Right ventricle myocardium inferior (tissue), 1 donor: ENCODE measurements at regions of chr1 and their contacts with region 1.

Region 1: GRCh38 chr1:91161749-91162148 is 139.9 kb upstream of the ZNF644 start:
- DNase-seq: no peak
- ATAC-seq: no peak

Region 2: GRCh38 chr1:90579212-90579802 is 582.4 kb before region 1 on chr1:
- intact Hi-C with region 1: loop called (anchors 5 kb)
- DNase-seq: no peak
- ATAC-seq: no peak

Region 3: DNA sequence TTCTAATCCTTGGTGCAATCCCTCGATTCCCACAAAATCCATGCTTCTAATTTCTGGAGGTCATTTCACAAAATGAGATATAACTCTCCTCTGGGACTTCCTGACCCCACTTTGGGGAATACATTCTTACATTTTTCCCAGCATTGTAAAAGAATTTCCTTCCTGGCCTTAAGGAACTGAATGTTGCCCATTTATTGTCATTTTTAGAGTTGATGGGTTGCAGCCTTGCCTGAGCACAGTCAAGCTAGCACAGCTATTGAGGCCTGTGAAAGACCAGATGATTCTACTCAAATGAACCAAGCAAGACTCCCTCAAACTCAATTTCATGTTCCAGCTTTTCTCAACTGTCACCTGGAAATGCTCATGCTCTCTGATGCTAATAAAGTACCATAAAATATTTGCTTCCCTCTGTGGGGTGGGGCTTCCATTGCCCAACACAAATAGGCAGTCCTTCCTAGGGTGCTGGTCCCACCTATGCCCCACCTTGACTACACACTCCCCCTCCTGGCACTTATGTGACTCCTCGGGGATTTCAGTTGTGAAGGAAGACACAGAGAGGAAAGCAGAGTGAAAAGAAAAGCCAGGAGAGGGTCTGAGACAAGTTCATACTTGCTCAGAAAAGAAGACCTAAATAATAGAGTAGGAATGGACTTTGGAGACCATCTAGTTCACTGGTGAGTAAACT is 314.9 kb after region 1 on chr1:
- intact Hi-C with region 1: no loop called
- DNase-seq: no peak
- ATAC-seq: peak; percentile 75